Mammary epithelial cell (primary cell): ENCODE measurements at regions of chr7 and their contacts with region 1.

Region 1: GRCh38 chr7:46189255-46189790 is 268.3 kb upstream of the IGFBP3 start:
- DNase-seq: no peak
- H3K4me3 ChIP-seq: no peak overlapping the region
- H3K27ac ChIP-seq: no peak overlapping the region
- H3K4me1 ChIP-seq: peaks cover 24% of the 10 kb centered on the region
- H3K27me3 ChIP-seq: no peaks in the 10 kb centered on the region
- CTCF ChIP-seq: no peak

Region 2: GRCh38 chr7:46145412-46145811 is 43.9 kb before region 1 on chr7:
- CTCF ChIA-PET with region 1: no interaction called
- dilution Hi-C with region 1: no loop called
- in situ Hi-C with region 1: no loop called
- intact Hi-C with region 1: no loop called
- DNase-seq: peak; percentile 71
- H3K4me3 ChIP-seq: no peak overlapping the region
- H3K27ac ChIP-seq: no peak overlapping the region
- H3K4me1 ChIP-seq: peaks cover 7% of the 10 kb centered on the region
- H3K27me3 ChIP-seq: no peaks in the 10 kb centered on the region
- CTCF ChIP-seq: no peak

Region 3: GRCh38 chr7:46229409-46229808 is 40.1 kb after region 1 on chr7:
- CTCF ChIA-PET with region 1: no interaction called
- dilution Hi-C with region 1: loop called (anchors 5 kb)
- in situ Hi-C with region 1: no loop called
- intact Hi-C with region 1: no loop called
- DNase-seq: peak; percentile 78
- H3K4me3 ChIP-seq: no peak overlapping the region
- H3K27ac ChIP-seq: no peak overlapping the region
- H3K4me1 ChIP-seq: no peaks in the 10 kb centered on the region
- H3K27me3 ChIP-seq: peaks cover 6% of the 10 kb centered on the region
- CTCF ChIP-seq: no peak

Region 4: GRCh38 chr7:46360811-46361210 is 171.5 kb after region 1 on chr7:
- CTCF ChIA-PET with region 1: no interaction called
- dilution Hi-C with region 1: no loop called
- in situ Hi-C with region 1: no loop called
- intact Hi-C with region 1: no loop called
- DNase-seq: no peak
- H3K4me3 ChIP-seq: no peak overlapping the region
- H3K27ac ChIP-seq: no peak overlapping the region
- H3K4me1 ChIP-seq: no peaks in the 10 kb centered on the region
- H3K27me3 ChIP-seq: no peaks in the 10 kb centered on the region
- CTCF ChIP-seq: peak in 1 of 2 donors; percentile 25